CD8-positive, alpha-beta T cell (primary cell): ENCODE measurements at regions of chr7 and their contacts with region 1.

Region 1: DNA sequence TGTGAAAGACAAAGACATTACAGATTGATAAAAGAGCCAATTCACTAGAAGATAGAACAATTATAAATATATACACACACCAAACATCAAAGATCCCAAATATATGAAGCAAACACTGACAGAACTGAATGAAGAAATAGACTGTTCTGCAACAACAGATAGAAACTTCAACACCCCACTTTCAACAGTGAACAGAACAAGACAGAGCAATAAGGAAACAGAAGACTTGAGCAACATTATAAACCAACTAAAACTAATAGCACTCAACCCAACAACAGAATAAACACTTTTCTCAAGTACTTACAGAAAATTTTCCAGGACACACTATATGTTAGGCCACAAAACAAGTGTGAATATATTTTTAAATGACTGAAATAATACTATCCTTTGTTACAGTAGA is 10.9 kb downstream of the CDCA7L start:
- DNase-seq: no peak
- ATAC-seq: no peak
- H3K4me3 ChIP-seq: no peak overlapping the region
- H3K4me3 Mint-ChIP-seq: no peak overlapping the region
- H3K27ac ChIP-seq: no peak overlapping the region
- H3K27ac Mint-ChIP-seq: peak overlapping the region; percentile 11
- H3K4me1 ChIP-seq: no peaks in the 10 kb centered on the region
- H3K4me1 Mint-ChIP-seq: peaks cover 26% of the 10 kb centered on the region
- H3K27me3 ChIP-seq: no peaks in the 10 kb centered on the region
- H3K27me3 Mint-ChIP-seq: no peaks in the 10 kb centered on the region
- CTCF ChIP-seq: no peak

Region 2: DNA sequence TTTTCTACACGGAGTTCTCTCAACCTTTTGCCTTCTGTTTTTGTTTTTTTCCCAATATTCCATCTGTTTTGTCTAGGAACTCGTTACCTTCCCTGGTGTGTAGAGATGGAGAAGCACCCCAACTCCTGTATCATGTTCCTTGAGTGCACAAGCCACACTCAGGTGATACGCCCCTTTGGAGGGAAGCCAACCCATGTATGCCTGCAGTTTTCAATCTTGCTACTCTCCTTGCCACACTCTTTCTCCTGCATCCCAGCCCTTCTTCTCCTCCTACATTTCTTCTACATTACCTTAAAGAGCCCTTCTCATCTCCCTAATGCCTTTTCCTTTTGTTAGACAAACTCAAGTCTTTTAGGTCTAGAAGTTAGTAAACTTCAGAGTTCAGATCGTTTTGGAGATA is 517.2 kb before region 1 on chr7:
- CTCF ChIA-PET with region 1: no interaction called
- POLR2A ChIA-PET with region 1: no interaction called
- intact Hi-C with region 1: no loop called
- DNase-seq: no peak
- ATAC-seq: no peak
- H3K4me3 ChIP-seq: no peak overlapping the region
- H3K4me3 Mint-ChIP-seq: no peak overlapping the region
- H3K27ac ChIP-seq: no peak overlapping the region
- H3K27ac Mint-ChIP-seq: no peak overlapping the region
- H3K4me1 ChIP-seq: no peaks in the 10 kb centered on the region
- H3K4me1 Mint-ChIP-seq: peaks cover 16% of the 10 kb centered on the region
- H3K27me3 ChIP-seq: no peaks in the 10 kb centered on the region
- H3K27me3 Mint-ChIP-seq: no peaks in the 10 kb centered on the region
- CTCF ChIP-seq: no peak

Region 3: GRCh38 chr7:21898265-21898930 is 36.4 kb before region 1 on chr7:
- CTCF ChIA-PET with region 1: no interaction called
- POLR2A ChIA-PET with region 1: no interaction called
- intact Hi-C with region 1: loop called in 1 of 2 experiments (anchors 5 kb)
- DNase-seq: peak in 5 of 9 experiments; percentile 7 to 66 (median 49)
- ATAC-seq: peak; percentile 75
- H3K4me3 ChIP-seq: peak overlapping the region; percentile 21 to 23
- H3K4me3 Mint-ChIP-seq: peak overlapping the region; percentile 77
- H3K27ac ChIP-seq: peak overlapping the region; percentile 15 to 68
- H3K27ac Mint-ChIP-seq: peak overlapping the region; percentile 92
- H3K4me1 ChIP-seq: peaks cover 17% of the 10 kb centered on the region
- H3K4me1 Mint-ChIP-seq: peaks cover 21% of the 10 kb centered on the region
- H3K27me3 ChIP-seq: no peaks in the 10 kb centered on the region
- H3K27me3 Mint-ChIP-seq: no peaks in the 10 kb centered on the region
- CTCF ChIP-seq: no peak